Colonic mucosa (tissue), 4 donors: ENCODE measurements at regions of chr6 and their contacts with region 1.

Region 1: DNA sequence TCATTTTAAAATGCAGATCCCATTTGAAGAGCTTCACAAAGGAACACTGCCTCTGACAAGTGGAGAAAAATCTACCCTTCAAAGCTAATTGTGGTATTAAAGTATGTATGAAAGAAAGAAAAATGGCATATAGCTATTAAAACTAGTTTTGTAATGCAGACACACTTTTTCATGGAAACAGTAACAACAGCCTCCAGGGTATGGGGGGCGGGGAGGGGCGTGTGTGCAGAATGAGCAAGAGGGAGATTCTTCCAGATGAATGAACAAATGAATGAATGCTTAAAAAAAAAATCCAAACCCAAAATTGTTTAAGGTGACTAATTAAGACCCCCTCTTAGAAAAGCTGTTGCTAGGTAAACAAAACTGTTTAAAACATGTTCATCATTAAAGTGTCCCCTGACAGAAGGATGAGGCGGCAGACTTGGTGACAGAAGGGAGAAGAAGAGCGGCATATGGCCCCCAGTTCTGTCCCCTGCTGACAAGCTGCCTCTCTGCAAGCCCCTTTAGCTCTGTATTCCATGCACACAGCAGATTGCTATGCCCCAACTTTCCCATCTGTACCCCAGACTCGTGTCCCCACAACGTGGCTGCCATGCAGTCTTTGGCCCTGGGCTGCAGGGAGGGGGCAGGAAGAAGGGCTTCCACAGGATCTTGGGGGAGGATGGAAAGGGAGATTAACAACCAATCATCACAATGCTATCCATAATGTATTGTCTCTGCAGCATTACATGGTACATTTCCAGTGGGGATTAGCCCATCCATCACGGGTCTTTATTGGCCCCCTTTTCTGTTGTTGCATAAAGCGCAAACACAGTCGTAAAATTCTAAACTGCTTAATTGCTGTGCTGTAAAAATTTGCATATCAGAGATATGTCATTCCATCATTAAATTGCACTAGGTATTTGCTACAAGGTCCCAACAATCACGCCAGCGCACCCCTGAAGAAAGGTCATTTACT is 108.4 kb upstream of the OLIG3 start:
- DNase-seq: no peak
- H3K4me3 ChIP-seq: no peak overlapping the region
- H3K27ac ChIP-seq: no peak overlapping the region
- H3K4me1 ChIP-seq: no peaks in the 10 kb centered on the region
- H3K27me3 ChIP-seq: no peaks in the 10 kb centered on the region
- CTCF ChIP-seq: no peak

Region 2: GRCh38 chr6:138654715-138655634 is 1052.4 kb after region 1 on chr6:
- intact Hi-C with region 1: loop called (anchors 10 kb)
- DNase-seq: no peak
- H3K4me3 ChIP-seq: no peak overlapping the region
- H3K27ac ChIP-seq: no peak overlapping the region
- H3K4me1 ChIP-seq: no peaks in the 10 kb centered on the region
- H3K27me3 ChIP-seq: no peaks in the 10 kb centered on the region
- CTCF ChIP-seq: no peak